IMR-90 (cell line): ENCODE measurements at regions of chr3 and their contacts with region 1.

Region 1: GRCh38 chr3:129490242-129491045 is 38.0 kb upstream of the RHO start:
- DNase-seq: peak; percentile 97
- ATAC-seq: peak; percentile 74
- H3K4me3 ChIP-seq: no peak overlapping the region
- H3K27ac ChIP-seq: peak overlapping the region; percentile 12
- H3K4me1 ChIP-seq: peaks cover 33% of the 10 kb centered on the region
- H3K27me3 ChIP-seq: no peaks in the 10 kb centered on the region
- CTCF ChIP-seq: peak; percentile 96
- POLR2A ChIP-seq: peak; percentile 41; the same call in 1 of the 2 replicates
- RAD21 ChIP-seq: peak; percentile 99

Region 2: GRCh38 chr3:129383292-129383860 is 107.1 kb before region 1 on chr3:
- CTCF ChIA-PET with region 1: interaction called, 8 read pairs
- POLR2A ChIA-PET with region 1: no interaction called
- dilution Hi-C with region 1: no loop called
- in situ Hi-C with region 1: no loop called
- intact Hi-C with region 1: loop called (anchors 2 kb)
- DNase-seq: peak; percentile 85
- ATAC-seq: peak; percentile 98
- H3K4me3 ChIP-seq: no peak overlapping the region
- H3K27ac ChIP-seq: no peak overlapping the region
- H3K4me1 ChIP-seq: peaks cover 7% of the 10 kb centered on the region
- H3K27me3 ChIP-seq: no peaks in the 10 kb centered on the region
- CTCF ChIP-seq: peak; percentile 90
- POLR2A ChIP-seq: peak; percentile 56; the same call in 1 of the 2 replicates
- RAD21 ChIP-seq: peak; percentile 93

Region 3: DNA sequence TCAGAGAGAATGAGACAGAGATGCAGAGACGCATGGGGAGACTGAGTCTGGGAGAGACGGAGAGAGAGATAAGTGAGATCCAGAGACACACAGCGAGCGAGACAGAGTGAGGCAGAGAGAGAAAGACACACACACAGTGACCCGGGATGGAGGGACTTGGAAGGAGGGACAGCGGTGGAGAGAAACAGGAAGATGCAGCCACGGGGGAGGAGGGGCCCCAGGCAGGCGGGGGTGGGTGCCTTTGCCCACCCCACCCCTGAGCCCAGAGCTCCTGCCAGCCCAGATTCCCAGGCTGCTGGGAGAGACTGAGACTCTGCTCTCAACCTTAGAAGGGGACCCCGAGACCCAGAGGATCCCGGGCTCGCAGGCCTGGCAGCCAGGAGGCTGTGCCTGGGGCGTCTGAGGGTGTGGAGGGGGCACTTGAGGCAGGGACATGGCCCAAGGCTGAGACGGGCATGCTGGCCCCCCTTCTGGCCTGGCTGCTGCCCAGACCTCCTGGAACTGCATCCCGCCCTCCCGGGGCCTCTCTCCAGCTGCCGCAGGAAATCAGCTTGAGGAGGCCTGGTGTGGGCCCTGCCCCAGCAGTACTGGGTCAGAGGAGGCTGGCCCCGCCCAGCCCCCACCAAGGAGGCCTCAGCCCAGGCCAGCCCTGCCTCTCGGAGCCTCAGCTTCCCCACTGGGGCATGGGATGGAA is 70.6 kb after region 1 on chr3:
- CTCF ChIA-PET with region 1: interaction called, 4 read pairs
- POLR2A ChIA-PET with region 1: no interaction called
- dilution Hi-C with region 1: no loop called
- in situ Hi-C with region 1: no loop called
- intact Hi-C with region 1: loop called (anchors 1 kb)
- DNase-seq: peak; percentile 76
- ATAC-seq: peak; percentile 80
- H3K4me3 ChIP-seq: peak overlapping the region; percentile 24; the same call in 1 of the 2 replicates
- H3K27ac ChIP-seq: peak overlapping the region; percentile 98
- H3K4me1 ChIP-seq: peaks cover 37% of the 10 kb centered on the region
- H3K27me3 ChIP-seq: no peaks in the 10 kb centered on the region
- CTCF ChIP-seq: no peak
- POLR2A ChIP-seq: no peak
- RAD21 ChIP-seq: 0 out of 2 replicates have a peak, but pooled peaks have one; percentile 9

Region 4: DNA sequence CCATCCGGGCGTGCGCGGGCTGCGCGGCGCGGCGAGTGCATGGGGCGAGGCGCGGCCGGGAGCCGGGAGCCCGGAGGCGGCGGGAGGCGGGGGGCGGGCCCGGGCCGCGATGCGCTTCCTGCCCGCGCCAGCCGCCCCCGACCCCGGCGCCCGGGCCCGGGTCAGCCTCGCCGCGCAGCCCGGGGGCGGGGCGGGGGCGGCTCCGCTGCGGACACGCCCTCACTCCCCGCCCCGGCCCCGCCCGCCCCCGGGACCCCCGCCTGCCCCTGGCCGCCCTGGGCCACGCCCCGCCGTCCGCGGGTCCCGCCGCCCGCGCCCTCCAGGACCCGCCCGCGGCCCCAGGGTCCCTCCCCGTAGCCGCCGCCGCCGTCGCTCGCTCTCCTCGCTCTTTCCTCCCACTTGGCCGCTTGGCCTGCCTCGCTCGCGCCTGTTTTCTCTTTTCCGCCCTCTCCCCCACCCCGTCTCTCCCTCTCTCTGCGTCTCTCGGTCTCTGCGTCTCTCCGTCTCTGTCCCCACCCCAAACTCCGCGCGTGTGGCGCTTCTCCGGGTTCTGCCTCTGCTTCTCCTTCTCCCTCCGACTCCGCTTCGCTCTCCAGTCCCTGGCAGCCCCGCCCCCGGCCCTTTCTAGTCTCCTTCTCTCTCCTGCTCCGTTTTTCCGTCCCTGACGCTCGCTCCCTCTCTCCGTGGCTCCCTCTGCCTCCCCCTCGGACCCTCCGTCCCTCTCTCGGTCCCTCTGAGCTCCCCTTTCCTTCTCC is 116.4 kb after region 1 on chr3 and contains the start of gene PLXND1:
- CTCF ChIA-PET with region 1: interaction called, 8 read pairs
- POLR2A ChIA-PET with region 1: no interaction called
- dilution Hi-C with region 1: no loop called
- in situ Hi-C with region 1: loop called (anchors 5 kb)
- intact Hi-C with region 1: loop called (anchors 1 kb)
- DNase-seq: peak; percentile 39
- ATAC-seq: peak; percentile 71
- H3K4me3 ChIP-seq: peak within 1 kb of the TSS; percentile 95
- H3K27ac ChIP-seq: peak within 1 kb of the TSS; percentile 81
- H3K4me1 ChIP-seq: peaks cover 30% of the 10 kb centered on the region
- H3K27me3 ChIP-seq: no peaks in the 10 kb centered on the region
- CTCF ChIP-seq: no peak
- POLR2A ChIP-seq: no peak
- RAD21 ChIP-seq: no peak
- total RNA-seq, gene PLXND1: 19.2 and 22.5 TPM in 2 replicates

Region 5: DNA sequence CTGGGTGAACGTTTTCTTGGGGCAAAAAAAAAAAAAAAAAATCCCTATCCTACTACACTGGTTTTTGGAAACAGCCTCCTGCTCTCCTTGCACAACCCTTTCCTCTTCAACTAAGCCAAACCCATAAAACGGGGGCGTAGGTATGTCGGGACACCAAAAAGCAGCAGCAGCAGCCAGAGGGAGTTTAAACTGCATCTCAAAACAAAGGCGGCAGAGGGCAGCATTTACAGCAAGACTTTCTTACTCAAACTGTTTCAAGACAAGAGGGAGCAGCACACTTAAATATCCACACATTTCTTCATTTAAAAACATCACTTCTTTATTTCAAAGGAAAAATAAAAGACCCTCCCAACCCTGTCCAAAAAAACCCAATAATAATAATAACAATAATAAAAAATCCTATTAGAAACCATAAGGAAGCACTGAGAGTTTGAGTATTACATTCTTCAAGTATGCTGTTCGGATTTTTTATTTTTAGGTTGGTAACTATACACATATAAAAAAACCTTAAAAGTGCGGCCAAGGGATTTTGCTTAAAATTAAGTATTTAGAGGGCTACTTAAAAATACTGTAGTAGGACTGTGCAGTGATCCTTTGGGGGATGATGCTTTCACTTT is 159.9 kb after region 1 on chr3:
- CTCF ChIA-PET with region 1: interaction called, 3 read pairs
- POLR2A ChIA-PET with region 1: no interaction called
- dilution Hi-C with region 1: no loop called
- in situ Hi-C with region 1: no loop called
- intact Hi-C with region 1: loop called (anchors 1 kb)
- DNase-seq: peak; percentile 84
- ATAC-seq: peak; percentile 75; the same call in 1 of the 2 replicates
- H3K4me3 ChIP-seq: no peak overlapping the region
- H3K27ac ChIP-seq: no peak overlapping the region
- H3K4me1 ChIP-seq: peaks cover 17% of the 10 kb centered on the region
- H3K27me3 ChIP-seq: no peaks in the 10 kb centered on the region
- CTCF ChIP-seq: peak; percentile 91
- POLR2A ChIP-seq: no peak
- RAD21 ChIP-seq: peak; percentile 87

Region 6: DNA sequence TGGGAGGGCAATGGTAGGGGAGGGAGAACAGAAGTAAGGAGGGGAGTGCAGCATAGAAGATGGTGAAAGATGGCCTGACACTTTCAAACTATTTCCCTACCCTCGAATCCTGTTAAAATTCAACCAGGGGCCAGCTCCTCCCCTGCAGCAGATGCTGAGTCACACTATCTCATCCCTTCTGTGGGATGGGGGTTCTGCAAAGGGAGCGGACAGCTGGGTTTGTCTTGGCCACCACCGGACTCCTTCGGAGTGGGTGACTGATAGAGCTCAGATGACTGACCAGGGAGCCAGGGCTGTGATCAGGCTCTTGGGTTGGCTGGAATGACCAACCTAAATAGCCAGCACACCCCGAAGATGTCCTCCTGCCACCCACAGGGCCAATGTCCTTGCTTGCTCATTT is 436.6 kb after region 1 on chr3:
- CTCF ChIA-PET with region 1: no interaction called
- POLR2A ChIA-PET with region 1: no interaction called
- dilution Hi-C with region 1: no loop called
- in situ Hi-C with region 1: loop called (anchors 5 kb)
- intact Hi-C with region 1: no loop called
- DNase-seq: no peak
- ATAC-seq: no peak
- H3K4me3 ChIP-seq: no peak overlapping the region
- H3K27ac ChIP-seq: no peak overlapping the region
- H3K4me1 ChIP-seq: no peaks in the 10 kb centered on the region
- H3K27me3 ChIP-seq: peaks cover 28% of the 10 kb centered on the region
- CTCF ChIP-seq: no peak
- POLR2A ChIP-seq: no peak
- RAD21 ChIP-seq: no peak